Ascending aorta (tissue), 2 donors: ENCODE measurements at regions of chr4 and their contacts with region 1.

Region 1: DNA sequence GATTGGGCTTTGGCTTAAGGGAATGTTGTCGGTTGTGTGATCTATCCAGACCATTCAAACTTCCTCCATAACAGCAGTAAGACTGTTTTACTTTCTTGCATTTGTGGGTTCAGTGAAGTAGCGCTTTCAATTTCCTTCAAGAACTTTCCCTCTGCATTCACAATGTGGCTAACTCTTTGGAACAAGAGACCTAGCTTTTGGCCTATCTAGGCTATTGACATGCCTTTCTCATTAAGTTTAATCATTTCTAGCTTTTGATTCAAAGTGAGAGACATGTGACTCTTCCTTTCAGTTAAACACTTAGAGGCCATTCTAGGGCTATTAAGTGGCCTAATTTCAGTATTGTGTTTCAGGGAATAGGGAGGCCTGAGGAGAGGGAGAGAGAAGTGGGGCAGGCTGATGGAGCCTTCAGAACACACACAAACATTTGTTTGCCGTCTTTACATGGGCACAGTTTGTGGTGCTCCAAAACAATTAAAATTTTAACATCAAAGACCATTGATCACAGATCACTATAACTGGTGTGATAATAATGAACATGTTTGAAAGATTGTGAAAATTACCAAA is 34.1 kb downstream of the ADH5 start:
- DNase-seq: no peak
- H3K4me3 ChIP-seq: no peak overlapping the region
- H3K27ac ChIP-seq: no peak overlapping the region
- H3K4me1 ChIP-seq: peaks cover 0 to 9% of the 10 kb centered on the region in 2 donors
- H3K27me3 ChIP-seq: no peaks in the 10 kb centered on the region
- CTCF ChIP-seq: no peak

Region 2: GRCh38 chr4:98995183-98996055 is 59.1 kb before region 1 on chr4 and contains the start of gene METAP1:
- intact Hi-C with region 1: loop called (anchors 1 kb)
- DNase-seq: peak; percentile 82 to 96
- H3K4me3 ChIP-seq: peak within 1 kb of the TSS; percentile 91
- H3K27ac ChIP-seq: peak within 1 kb of the TSS; percentile 81 to 91
- H3K4me1 ChIP-seq: peaks cover 0 to 7% of the 10 kb centered on the region in 2 donors
- H3K27me3 ChIP-seq: no peaks in the 10 kb centered on the region
- CTCF ChIP-seq: peak; percentile 39 to 64 (median 58)
- total RNA-seq, gene METAP1: 53.2 TPM